Activated CD4-positive, alpha-beta memory T cell treated with anti-CD3 and anti-CD28 coated beads for 36 hours (primary cell): ENCODE measurements at regions of chr19 and their contacts with region 1.

Region 1: GRCh38 chr19:12965017-12965811 is 4.2 kb upstream of the DAND5 start:
- DNase-seq: peak; percentile 91
- H3K4me3 Mint-ChIP-seq: peak overlapping the region; percentile 86
- H3K27ac Mint-ChIP-seq: peak overlapping the region; percentile 81
- H3K4me1 Mint-ChIP-seq: peaks cover 10% of the 10 kb centered on the region
- H3K27me3 Mint-ChIP-seq: no peaks in the 10 kb centered on the region

Region 2: GRCh38 chr19:12696366-12697335 is 268.6 kb before region 1 on chr19 and contains the start of gene FBXW9:
- CTCF ChIA-PET with region 1: no interaction called
- POLR2A ChIA-PET with region 1: no interaction called
- intact Hi-C with region 1: no loop called
- DNase-seq: peak; percentile 98
- H3K4me3 Mint-ChIP-seq: peak within 1 kb of the TSS; percentile 84
- H3K27ac Mint-ChIP-seq: peak within 1 kb of the TSS; percentile 87
- H3K4me1 Mint-ChIP-seq: peaks cover 14% of the 10 kb centered on the region
- H3K27me3 Mint-ChIP-seq: no peaks in the 10 kb centered on the region
- total RNA-seq, gene FBXW9: 6.6 to 7.0 TPM

Region 3: GRCh38 chr19:12881172-12881808 is 83.9 kb before region 1 on chr19 and contains the start of gene DNASE2:
- CTCF ChIA-PET with region 1: interaction called, 33 read pairs
- POLR2A ChIA-PET with region 1: interaction called, 10 read pairs
- intact Hi-C with region 1: loop called (anchors 1 kb)
- DNase-seq: peak; percentile 96
- H3K4me3 Mint-ChIP-seq: peak within 1 kb of the TSS; percentile 89
- H3K27ac Mint-ChIP-seq: peak within 1 kb of the TSS; percentile 86
- H3K4me1 Mint-ChIP-seq: peaks cover 24% of the 10 kb centered on the region
- H3K27me3 Mint-ChIP-seq: no peaks in the 10 kb centered on the region
- total RNA-seq, gene DNASE2: 27.0 to 27.5 TPM

Region 4: GRCh38 chr19:12913011-12913561 is 52.1 kb before region 1 on chr19:
- CTCF ChIA-PET with region 1: interaction called, 12 read pairs
- POLR2A ChIA-PET with region 1: no interaction called
- intact Hi-C with region 1: no loop called
- DNase-seq: no peak
- H3K4me3 Mint-ChIP-seq: no peak overlapping the region
- H3K27ac Mint-ChIP-seq: no peak overlapping the region
- H3K4me1 Mint-ChIP-seq: peaks cover 11% of the 10 kb centered on the region
- H3K27me3 Mint-ChIP-seq: no peaks in the 10 kb centered on the region

Region 5: GRCh38 chr19:12945479-12946091 is 19.6 kb before region 1 on chr19 and contains the start of gene RAD23A:
- CTCF ChIA-PET with region 1: interaction called, 15 read pairs
- POLR2A ChIA-PET with region 1: interaction called, 3 read pairs
- intact Hi-C with region 1: no loop called
- DNase-seq: peak; percentile 99
- H3K4me3 Mint-ChIP-seq: peak within 1 kb of the TSS; percentile 85
- H3K27ac Mint-ChIP-seq: peak within 1 kb of the TSS; percentile 98
- H3K4me1 Mint-ChIP-seq: peaks cover 51% of the 10 kb centered on the region
- H3K27me3 Mint-ChIP-seq: peaks cover 1% of the 10 kb centered on the region
- total RNA-seq, gene RAD23A: 190 to 194 TPM

Region 6: DNA sequence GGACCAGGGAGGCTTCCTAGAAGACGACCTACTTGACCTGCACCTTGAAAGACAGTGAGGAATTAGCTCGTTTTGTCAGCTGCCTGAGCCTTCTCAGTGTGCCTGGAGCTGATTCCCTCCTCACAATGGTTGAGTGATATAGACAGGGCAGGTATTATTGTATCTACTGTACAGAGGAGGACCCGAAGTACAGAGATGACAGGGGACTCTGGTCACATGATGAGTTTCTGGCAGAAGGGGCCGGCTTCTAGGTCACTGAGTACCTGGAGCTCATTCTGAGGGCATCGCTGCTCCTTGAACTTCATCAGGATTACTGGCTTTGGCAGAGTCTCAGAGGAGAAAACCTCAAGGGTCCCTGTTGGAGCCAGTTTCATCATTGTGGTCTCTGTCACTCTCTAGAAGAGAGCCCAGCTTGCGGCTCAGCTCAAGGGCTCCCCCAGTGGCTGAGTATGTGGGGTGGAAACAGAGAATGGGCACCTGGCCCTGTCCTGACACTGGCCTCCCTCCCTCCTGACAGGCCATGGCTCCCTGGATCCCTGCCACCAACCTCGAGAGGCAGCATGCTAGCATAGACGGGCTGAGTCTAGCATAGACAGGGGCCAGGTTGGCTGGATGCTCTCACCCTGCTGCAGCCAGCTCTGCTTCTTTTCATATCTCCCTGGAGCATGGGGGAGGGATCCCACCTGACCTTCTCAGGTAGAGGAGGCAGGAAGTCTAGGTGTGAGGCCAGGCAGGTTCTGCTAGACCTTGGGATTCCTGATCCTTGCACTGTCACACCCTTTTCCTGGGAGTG is 68.8 kb after region 1 on chr19:
- CTCF ChIA-PET with region 1: interaction called, 16 read pairs
- POLR2A ChIA-PET with region 1: no interaction called
- intact Hi-C with region 1: no loop called
- DNase-seq: peak; percentile 60
- H3K4me3 Mint-ChIP-seq: no peak overlapping the region
- H3K27ac Mint-ChIP-seq: no peak overlapping the region
- H3K4me1 Mint-ChIP-seq: peaks cover 5% of the 10 kb centered on the region
- H3K27me3 Mint-ChIP-seq: no peaks in the 10 kb centered on the region

Region 7: DNA sequence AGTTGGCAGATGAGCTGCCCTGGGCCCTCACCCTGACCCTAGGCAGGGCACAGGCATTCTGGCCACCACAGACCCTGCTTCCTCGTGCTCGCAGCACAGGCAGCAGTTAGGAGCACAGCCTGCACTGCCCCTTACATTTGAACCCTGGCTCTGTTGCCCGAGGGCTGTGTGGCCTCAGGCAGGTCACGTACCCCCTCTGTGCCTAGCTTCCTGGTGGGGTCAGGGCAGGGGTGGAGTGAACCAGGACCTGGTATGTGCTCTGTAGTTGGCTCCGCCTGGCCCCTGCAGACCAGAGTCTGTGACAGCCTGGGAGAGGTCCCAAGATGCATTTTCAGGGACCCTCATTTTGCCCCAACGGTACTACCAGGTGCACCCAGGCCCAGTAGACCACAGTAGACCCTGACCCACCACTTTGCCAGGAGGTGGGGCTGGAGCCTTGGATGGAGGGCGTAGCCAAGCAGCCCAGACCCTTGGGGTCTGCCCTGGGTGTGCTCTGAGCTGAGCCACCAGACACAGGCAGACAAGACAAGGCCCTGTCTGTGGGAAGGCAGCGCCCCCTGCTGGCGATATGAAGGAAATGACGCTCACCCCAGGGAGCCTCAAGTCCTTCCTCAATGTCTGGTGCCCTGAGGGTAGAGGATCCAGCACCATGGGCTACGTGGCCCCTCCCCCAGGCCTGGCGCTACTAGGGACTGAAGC is 128.3 kb after region 1 on chr19:
- CTCF ChIA-PET with region 1: interaction called, 107 read pairs
- POLR2A ChIA-PET with region 1: no interaction called
- intact Hi-C with region 1: no loop called
- DNase-seq: peak; percentile 89
- H3K4me3 Mint-ChIP-seq: no peak overlapping the region
- H3K27ac Mint-ChIP-seq: no peak overlapping the region
- H3K4me1 Mint-ChIP-seq: peaks cover 24% of the 10 kb centered on the region
- H3K27me3 Mint-ChIP-seq: peaks cover 20% of the 10 kb centered on the region

Region 8: GRCh38 chr19:13104360-13104847 is 139.2 kb after region 1 on chr19:
- CTCF ChIA-PET with region 1: interaction called, 29 read pairs
- POLR2A ChIA-PET with region 1: no interaction called
- intact Hi-C with region 1: no loop called
- DNase-seq: peak; percentile 81
- H3K4me3 Mint-ChIP-seq: peak overlapping the region; percentile 92
- H3K27ac Mint-ChIP-seq: peak overlapping the region; percentile 94
- H3K4me1 Mint-ChIP-seq: peaks cover 32% of the 10 kb centered on the region
- H3K27me3 Mint-ChIP-seq: no peaks in the 10 kb centered on the region

Region 9: DNA sequence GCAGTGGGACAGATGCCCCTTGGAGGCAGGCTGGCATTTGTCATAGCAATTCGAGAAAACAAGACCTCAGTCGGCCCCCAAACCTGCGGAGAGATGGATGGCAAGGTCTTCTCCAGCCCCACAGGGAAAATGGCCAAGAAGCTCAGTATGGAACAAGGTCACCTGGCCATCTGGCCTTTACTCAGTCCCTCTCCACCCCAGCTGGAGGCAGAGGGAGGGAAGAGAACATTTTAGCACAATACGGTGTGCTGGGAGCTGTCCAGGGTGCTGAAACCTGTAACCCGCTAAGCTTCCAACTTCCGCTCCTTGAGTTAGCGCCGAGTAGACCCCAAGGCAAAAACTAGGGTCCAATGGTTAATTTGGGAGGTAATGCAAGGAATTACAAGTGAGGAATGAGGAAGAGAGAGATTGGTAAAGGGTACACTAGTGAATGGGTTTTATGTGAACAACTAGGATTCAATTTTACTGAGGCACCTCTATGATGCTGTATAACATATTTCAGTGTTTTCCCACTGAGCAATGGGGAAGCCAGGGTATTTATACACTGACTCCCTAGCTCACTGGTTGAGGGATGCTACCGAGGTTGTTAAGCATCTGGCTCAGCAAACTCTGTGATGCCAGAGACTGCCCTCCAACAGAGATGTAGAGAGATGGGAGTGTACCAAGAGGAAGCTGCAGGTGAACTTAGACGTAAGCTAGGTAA is 476.7 kb after region 1 on chr19:
- CTCF ChIA-PET with region 1: no interaction called
- POLR2A ChIA-PET with region 1: no interaction called
- intact Hi-C with region 1: no loop called
- DNase-seq: peak; percentile 52
- H3K4me3 Mint-ChIP-seq: no peak overlapping the region
- H3K27ac Mint-ChIP-seq: no peak overlapping the region
- H3K4me1 Mint-ChIP-seq: no peaks in the 10 kb centered on the region
- H3K27me3 Mint-ChIP-seq: peaks cover 10% of the 10 kb centered on the region